Endothelial cell of umbilical vein (primary cell): ENCODE measurements at regions of chr20 and their contacts with region 1.

Region 1: GRCh38 chr20:38883081-38883980 is 42.9 kb upstream of the FAM83D start:
- DNase-seq: no peak
- H3K4me3 ChIP-seq: no peak overlapping the region
- H3K27ac ChIP-seq: no peak overlapping the region
- H3K4me1 ChIP-seq: peaks cover 6% of the 10 kb centered on the region
- H3K27me3 ChIP-seq: no peaks in the 10 kb centered on the region
- CTCF ChIP-seq: no peak
- POLR2A ChIP-seq: no peak

Region 2: GRCh38 chr20:38893565-38894090 is 10.3 kb after region 1 on chr20:
- CTCF ChIA-PET with region 1: interaction called, 17 read pairs
- POLR2A ChIA-PET with region 1: no interaction called
- dilution Hi-C with region 1: no loop called
- intact Hi-C with region 1: no loop called
- DNase-seq: peak; percentile 65
- H3K4me3 ChIP-seq: no peak overlapping the region
- H3K27ac ChIP-seq: no peak overlapping the region
- H3K4me1 ChIP-seq: peaks cover 5% of the 10 kb centered on the region
- H3K27me3 ChIP-seq: no peaks in the 10 kb centered on the region
- CTCF ChIP-seq: peak; percentile 86 to 99
- POLR2A ChIP-seq: no peak